Activated CD4-positive, alpha-beta memory T cell treated with anti-CD3 and anti-CD28 coated beads for 36 hours (primary cell): ENCODE measurements at regions of chr4 and their contacts with region 1.

Region 1: DNA sequence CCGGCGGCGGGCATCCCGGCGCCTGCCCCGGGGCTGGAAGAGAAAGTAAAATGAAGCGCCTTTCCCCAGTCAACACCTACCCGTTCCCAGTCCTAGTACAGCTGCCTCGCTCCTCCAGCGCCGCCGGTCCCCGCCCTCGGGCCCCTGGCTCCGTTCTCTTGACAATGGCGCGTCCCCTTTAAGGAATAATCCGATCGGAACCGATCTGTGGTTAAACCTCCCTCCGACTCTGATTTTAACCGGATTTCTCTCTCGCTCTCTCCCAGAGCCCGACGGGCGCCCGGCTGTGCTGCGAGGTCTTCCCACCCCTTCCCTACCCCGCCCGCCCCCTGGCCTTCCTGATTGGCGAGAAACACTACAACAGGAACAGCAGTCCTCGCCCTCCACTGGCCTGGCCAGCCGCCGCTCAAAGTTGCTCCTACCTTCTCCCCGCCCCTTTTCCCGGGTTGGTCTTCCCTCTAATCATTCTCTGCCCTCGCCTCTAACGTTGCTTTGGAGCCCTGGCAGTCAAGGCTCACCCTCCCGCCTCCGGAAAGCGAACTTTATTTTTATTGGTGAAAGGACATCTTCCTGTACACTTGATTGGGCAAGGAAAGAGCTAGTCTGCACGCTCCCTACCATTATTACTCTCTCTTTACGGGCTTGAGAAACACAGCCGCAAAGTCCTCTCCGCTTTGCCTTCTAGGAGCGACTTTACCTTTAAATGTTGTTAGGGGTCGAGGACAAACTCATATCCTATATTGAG is at the start of gene FRYL:
- DNase-seq: peak; percentile 100
- H3K4me3 Mint-ChIP-seq: peak within 1 kb of the TSS; percentile 96
- H3K27ac Mint-ChIP-seq: peak within 1 kb of the TSS; percentile 98
- H3K4me1 Mint-ChIP-seq: peaks cover 38% of the 10 kb centered on the region
- H3K27me3 Mint-ChIP-seq: no peaks in the 10 kb centered on the region
- total RNA-seq, gene FRYL: 59.1 to 67.3 TPM

Region 2: GRCh38 chr4:47463235-47463956 is 1316.8 kb before region 1 on chr4 and contains the start of gene COMMD8:
- CTCF ChIA-PET with region 1: no interaction called
- POLR2A ChIA-PET with region 1: no interaction called
- intact Hi-C with region 1: loop called (anchors 1 kb)
- DNase-seq: peak; percentile 98
- H3K4me3 Mint-ChIP-seq: peak within 1 kb of the TSS; percentile 85
- H3K27ac Mint-ChIP-seq: peak within 1 kb of the TSS; percentile 68
- H3K4me1 Mint-ChIP-seq: peaks cover 26% of the 10 kb centered on the region
- H3K27me3 Mint-ChIP-seq: no peaks in the 10 kb centered on the region
- total RNA-seq, gene COMMD8: 27.5 to 27.9 TPM

Region 3: GRCh38 chr4:48269861-48270522 is 510.2 kb before region 1 on chr4:
- CTCF ChIA-PET with region 1: no interaction called
- POLR2A ChIA-PET with region 1: no interaction called
- intact Hi-C with region 1: loop called (anchors 5 kb)
- DNase-seq: peak; percentile 95
- H3K4me3 Mint-ChIP-seq: peak overlapping the region; percentile 91
- H3K27ac Mint-ChIP-seq: peak overlapping the region; percentile 75
- H3K4me1 Mint-ChIP-seq: peaks cover 23% of the 10 kb centered on the region
- H3K27me3 Mint-ChIP-seq: no peaks in the 10 kb centered on the region

Region 4: GRCh38 chr4:48578132-48578968 is 201.8 kb before region 1 on chr4:
- CTCF ChIA-PET with region 1: interaction called, 37 read pairs
- POLR2A ChIA-PET with region 1: no interaction called
- intact Hi-C with region 1: loop called (anchors 1 kb)
- DNase-seq: peak; percentile 37
- H3K4me3 Mint-ChIP-seq: no peak overlapping the region
- H3K27ac Mint-ChIP-seq: no peak overlapping the region
- H3K4me1 Mint-ChIP-seq: peaks cover 4% of the 10 kb centered on the region
- H3K27me3 Mint-ChIP-seq: no peaks in the 10 kb centered on the region

Region 5: GRCh38 chr4:48620831-48621230 is 159.3 kb before region 1 on chr4:
- CTCF ChIA-PET with region 1: no interaction called
- POLR2A ChIA-PET with region 1: no interaction called
- intact Hi-C with region 1: no loop called
- DNase-seq: no peak
- H3K4me3 Mint-ChIP-seq: no peak overlapping the region
- H3K27ac Mint-ChIP-seq: no peak overlapping the region
- H3K4me1 Mint-ChIP-seq: no peaks in the 10 kb centered on the region
- H3K27me3 Mint-ChIP-seq: no peaks in the 10 kb centered on the region

Region 6: GRCh38 chr4:48698029-48698971 is 81.9 kb before region 1 on chr4:
- CTCF ChIA-PET with region 1: interaction called, 4 read pairs
- POLR2A ChIA-PET with region 1: interaction called, 3 read pairs
- intact Hi-C with region 1: loop called (anchors 1 kb)
- DNase-seq: no peak
- H3K4me3 Mint-ChIP-seq: no peak overlapping the region
- H3K27ac Mint-ChIP-seq: no peak overlapping the region
- H3K4me1 Mint-ChIP-seq: peaks cover 56% of the 10 kb centered on the region
- H3K27me3 Mint-ChIP-seq: no peaks in the 10 kb centered on the region

Region 7: DNA sequence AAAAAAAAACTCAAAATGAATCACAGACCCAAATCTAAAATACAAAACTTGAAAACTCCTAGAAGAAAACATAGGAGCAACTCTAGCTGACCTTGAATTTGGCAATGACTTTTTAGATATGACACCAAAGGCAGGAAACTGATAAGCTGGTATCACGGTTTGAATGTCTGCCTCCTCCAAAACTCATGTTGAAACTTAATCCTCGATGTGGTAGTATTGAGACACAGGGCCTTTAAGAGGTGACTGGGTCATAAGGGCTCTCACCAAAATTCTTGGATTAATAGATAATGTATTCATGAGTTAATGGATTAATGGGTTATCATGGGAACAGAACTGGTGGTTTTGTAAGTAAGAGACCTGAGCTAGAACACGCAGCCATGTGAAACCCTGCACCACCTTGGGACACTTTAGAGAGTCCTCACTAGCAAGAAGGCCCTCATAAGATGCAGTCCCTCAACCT is 40.6 kb before region 1 on chr4:
- CTCF ChIA-PET with region 1: no interaction called
- POLR2A ChIA-PET with region 1: interaction called, 3 read pairs
- intact Hi-C with region 1: loop called (anchors 2 kb)
- DNase-seq: no peak
- H3K4me3 Mint-ChIP-seq: no peak overlapping the region
- H3K27ac Mint-ChIP-seq: peak overlapping the region; percentile 38
- H3K4me1 Mint-ChIP-seq: peaks cover 69% of the 10 kb centered on the region
- H3K27me3 Mint-ChIP-seq: no peaks in the 10 kb centered on the region

Region 8: DNA sequence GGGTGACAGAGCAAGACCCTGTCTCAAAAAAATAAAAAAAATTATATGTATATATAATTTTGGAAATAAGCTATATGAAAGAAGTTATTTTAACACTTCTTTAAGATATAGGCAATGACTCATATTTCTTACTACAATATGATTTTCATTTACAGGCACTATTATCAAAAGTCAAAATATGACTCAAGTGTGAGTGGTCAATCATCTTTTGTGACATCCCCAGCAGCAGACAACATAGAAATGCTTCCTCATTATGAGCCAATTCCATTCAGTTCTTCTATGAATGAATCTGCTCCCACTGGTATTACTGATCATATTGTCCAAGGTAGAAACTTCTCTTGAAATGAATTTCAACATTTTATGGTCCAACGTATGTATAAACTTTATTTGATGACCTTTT is 71.5 kb after region 1 on chr4:
- CTCF ChIA-PET with region 1: no interaction called
- POLR2A ChIA-PET with region 1: no interaction called
- intact Hi-C with region 1: no loop called
- DNase-seq: no peak
- H3K4me3 Mint-ChIP-seq: no peak overlapping the region
- H3K27ac Mint-ChIP-seq: no peak overlapping the region
- H3K4me1 Mint-ChIP-seq: peaks cover 14% of the 10 kb centered on the region
- H3K27me3 Mint-ChIP-seq: no peaks in the 10 kb centered on the region

Region 9: DNA sequence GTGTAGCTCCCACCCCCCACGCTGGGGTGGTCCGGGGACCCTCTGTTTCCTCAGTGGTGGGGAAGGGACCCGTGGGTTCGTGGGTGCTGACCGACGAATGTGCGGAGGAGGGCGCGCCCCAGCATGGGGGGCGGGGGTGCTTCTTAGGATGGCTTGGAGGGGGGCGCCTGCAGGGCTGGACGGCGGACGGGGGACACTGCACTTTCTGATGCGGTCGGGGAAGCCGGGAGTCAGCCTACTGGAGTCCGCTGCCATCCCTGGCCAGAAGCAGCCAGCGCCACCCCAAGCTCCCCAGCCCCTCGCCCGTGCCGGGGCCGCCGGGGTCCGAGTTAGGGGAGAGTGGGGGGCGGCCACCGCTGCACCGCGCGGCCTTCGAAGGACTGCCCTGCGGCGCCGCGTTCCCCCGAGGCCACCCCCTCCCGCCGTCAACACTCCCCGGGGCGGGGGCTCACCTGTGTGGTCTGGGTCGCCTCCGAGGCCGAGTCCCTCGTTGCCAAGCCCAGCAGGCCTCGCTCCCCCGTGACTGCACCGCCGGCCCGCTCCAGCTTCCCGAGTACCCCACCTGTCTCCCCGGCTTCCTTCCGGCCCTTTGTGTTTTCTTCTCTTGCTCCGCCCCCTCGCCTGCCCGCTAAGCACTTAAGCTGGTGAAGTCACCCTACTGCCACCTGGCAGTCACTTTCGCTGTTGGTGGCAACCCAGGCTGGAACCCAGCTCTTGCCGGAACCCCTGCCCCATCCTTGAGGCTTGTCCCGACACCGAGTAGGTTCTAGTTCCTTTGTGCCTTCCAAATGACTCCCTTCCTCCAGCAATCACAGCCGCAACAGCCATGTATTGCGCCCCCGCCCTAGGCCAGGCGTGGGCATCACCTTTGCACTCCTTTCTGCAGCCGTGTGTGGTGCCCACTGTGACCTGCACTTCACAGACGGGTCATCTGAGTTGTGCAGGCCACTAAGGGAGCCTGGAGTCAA is 126.3 kb after region 1 on chr4 and contains the start of gene OCIAD2:
- CTCF ChIA-PET with region 1: interaction called, 5 read pairs
- POLR2A ChIA-PET with region 1: no interaction called
- intact Hi-C with region 1: loop called (anchors 1 kb)
- DNase-seq: peak; percentile 90
- H3K4me3 Mint-ChIP-seq: peak within 1 kb of the TSS; percentile 84
- H3K27ac Mint-ChIP-seq: peak within 1 kb of the TSS; percentile 88
- H3K4me1 Mint-ChIP-seq: peaks cover 46% of the 10 kb centered on the region
- H3K27me3 Mint-ChIP-seq: no peaks in the 10 kb centered on the region
- total RNA-seq, gene OCIAD2: 54.2 to 71.6 TPM

Region 10: DNA sequence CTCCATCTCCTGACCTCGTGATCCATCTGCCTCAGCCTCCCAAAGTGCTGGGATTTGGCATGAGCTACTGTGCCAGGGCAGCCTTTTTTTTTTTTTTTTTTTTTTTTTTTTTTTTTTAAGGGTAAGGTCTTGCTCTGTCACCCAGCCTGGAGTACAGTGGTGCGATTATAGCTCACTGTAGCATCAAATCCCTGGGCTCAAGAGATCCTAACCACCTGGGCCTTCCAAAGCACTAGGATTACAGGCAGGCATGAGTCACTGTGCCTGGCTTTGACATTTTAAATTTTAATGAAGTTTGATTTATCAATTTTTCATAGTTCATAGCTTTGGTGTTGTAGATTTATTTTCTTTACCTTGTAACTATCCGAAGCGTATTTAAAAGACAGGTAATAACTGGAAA is 144.2 kb after region 1 on chr4:
- CTCF ChIA-PET with region 1: no interaction called
- POLR2A ChIA-PET with region 1: no interaction called
- intact Hi-C with region 1: no loop called
- DNase-seq: no peak
- H3K4me3 Mint-ChIP-seq: no peak overlapping the region
- H3K27ac Mint-ChIP-seq: no peak overlapping the region
- H3K4me1 Mint-ChIP-seq: peaks cover 4% of the 10 kb centered on the region
- H3K27me3 Mint-ChIP-seq: no peaks in the 10 kb centered on the region